Activated naive CD4-positive, alpha-beta T cell treated with anti-CD3 and anti-CD28 coated beads for 36 hours (primary cell): ENCODE measurements at regions of chr2 and their contacts with region 1.

Region 1: GRCh38 chr2:156400706-156401678 is 35.2 kb upstream of the GPD2 start:
- DNase-seq: peak; percentile 85
- H3K4me3 Mint-ChIP-seq: peak overlapping the region; percentile 89
- H3K27ac Mint-ChIP-seq: peak overlapping the region; percentile 99
- H3K4me1 Mint-ChIP-seq: peaks cover 34% of the 10 kb centered on the region
- H3K27me3 Mint-ChIP-seq: peaks cover 5% of the 10 kb centered on the region

Region 2: DNA sequence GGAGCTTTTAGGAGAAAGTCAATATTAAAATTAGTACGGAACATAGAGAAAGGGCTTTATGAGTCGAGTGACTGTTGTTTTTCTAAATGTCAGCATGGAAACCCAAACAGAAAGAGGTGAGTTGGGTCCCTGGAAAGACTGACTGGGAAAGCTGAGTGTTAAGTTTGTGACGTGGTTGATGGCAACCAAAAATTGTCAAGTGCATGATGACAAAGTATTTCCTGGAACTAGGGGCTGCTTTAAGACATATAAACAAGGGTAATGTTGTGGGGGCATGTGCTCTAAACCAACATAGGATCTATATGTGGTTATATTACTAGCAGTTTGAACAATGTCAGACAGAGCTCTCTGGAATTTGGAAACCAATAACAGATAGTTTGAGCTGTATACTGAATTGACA is 15.8 kb before region 1 on chr2:
- CTCF ChIA-PET with region 1: interaction called, 5 read pairs
- intact Hi-C with region 1: loop called (anchors 1 kb)
- DNase-seq: peak; percentile 57
- H3K4me3 Mint-ChIP-seq: no peak overlapping the region
- H3K27ac Mint-ChIP-seq: peak overlapping the region; percentile 80
- H3K4me1 Mint-ChIP-seq: peaks cover 20% of the 10 kb centered on the region
- H3K27me3 Mint-ChIP-seq: no peaks in the 10 kb centered on the region

Region 3: DNA sequence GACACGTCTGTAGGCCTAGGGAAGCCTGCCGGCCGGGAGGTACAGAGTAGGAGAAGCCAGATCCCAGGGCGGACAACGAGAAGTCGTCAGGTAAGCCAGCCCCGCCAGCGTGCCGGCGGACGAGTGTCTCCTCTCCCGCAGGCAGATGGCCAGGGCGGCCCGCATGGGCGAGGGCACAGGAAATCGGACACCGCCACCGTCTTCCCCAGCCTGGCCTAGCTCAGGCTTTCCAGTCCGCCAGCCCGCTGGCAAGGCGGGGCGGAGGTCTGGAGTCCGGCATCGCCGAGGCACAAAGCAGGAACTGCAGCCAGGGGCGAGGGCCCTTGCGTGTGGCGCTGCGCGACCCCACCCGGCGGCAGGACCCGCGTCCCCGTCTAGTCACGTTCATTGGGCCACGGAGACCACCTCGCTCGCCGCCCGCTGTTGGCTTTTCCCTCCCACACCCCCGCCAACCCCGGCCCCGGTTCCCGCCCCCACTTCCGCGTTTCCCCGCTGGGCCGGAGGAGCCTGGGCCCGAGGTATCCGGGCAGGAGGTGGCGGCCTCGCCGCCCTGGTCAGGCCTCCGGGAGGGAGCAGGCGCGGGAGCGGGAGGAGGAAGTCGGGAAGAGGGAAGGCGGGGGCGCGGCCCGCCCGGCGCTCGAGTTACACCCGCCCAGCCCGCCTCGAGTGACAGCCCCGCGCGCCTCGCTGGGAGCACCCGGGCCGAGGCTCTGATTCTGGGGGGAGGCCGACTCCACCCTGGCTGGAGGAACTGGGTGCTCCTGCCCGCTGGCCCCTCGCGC is 34.9 kb after region 1 on chr2 and contains the start of gene GPD2:
- CTCF ChIA-PET with region 1: interaction called, 3 read pairs
- intact Hi-C with region 1: loop called (anchors 1 kb)
- DNase-seq: peak; percentile 56
- H3K4me3 Mint-ChIP-seq: peak within 1 kb of the TSS; percentile 94
- H3K27ac Mint-ChIP-seq: peak within 1 kb of the TSS; percentile 92
- H3K4me1 Mint-ChIP-seq: peaks cover 30% of the 10 kb centered on the region
- H3K27me3 Mint-ChIP-seq: no peaks in the 10 kb centered on the region
- total RNA-seq, gene GPD2: 18.8 to 19.9 TPM

Region 4: DNA sequence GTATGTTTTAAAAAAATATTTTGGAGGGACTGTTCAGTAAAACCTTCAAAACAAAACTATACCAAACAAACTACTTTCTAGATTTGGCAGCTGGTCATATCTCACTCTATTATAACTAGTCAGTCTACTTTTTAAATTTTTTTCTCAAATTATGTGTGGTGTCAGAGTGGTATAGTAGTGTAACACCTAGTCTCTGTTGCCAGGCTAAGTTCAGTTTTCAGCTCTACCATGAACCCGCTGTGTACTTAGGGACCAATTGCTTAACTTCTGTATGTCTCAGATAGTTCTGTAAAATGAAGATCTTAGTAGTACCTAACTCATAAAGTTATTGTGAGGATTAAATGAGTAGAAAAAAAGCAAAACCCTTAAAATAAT is 89.5 kb after region 1 on chr2:
- CTCF ChIA-PET with region 1: no interaction called
- intact Hi-C with region 1: loop called (anchors 2 kb)
- DNase-seq: no peak
- H3K4me3 Mint-ChIP-seq: no peak overlapping the region
- H3K27ac Mint-ChIP-seq: no peak overlapping the region
- H3K4me1 Mint-ChIP-seq: peaks cover 40% of the 10 kb centered on the region
- H3K27me3 Mint-ChIP-seq: no peaks in the 10 kb centered on the region

Region 5: DNA sequence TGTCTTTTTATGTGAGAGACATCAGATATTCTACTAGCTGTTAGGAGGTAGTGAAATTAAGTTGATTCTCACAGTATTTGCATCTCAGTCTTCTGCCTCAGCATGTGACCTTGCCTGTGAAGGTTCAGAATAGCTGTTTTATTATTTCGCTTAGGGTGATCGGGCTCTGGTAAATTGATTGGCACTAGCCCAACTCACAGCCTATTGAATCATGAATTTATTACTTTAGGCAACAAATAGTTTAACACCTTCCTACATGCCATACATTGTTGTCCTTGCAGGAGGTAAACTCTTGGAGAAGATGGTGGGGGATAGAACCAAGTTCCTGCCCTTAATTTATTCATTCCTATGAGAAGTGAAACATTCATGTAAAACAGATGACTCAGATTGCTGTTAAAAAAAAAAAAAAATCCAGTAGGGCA is 137.1 kb after region 1 on chr2:
- CTCF ChIA-PET with region 1: no interaction called
- intact Hi-C with region 1: loop called (anchors 1 kb)
- DNase-seq: no peak
- H3K4me3 Mint-ChIP-seq: no peak overlapping the region
- H3K27ac Mint-ChIP-seq: no peak overlapping the region
- H3K4me1 Mint-ChIP-seq: peaks cover 39% of the 10 kb centered on the region
- H3K27me3 Mint-ChIP-seq: no peaks in the 10 kb centered on the region